ENCODE measurements at regions of chr5 and their contacts with region 1.

Region 1: DNA sequence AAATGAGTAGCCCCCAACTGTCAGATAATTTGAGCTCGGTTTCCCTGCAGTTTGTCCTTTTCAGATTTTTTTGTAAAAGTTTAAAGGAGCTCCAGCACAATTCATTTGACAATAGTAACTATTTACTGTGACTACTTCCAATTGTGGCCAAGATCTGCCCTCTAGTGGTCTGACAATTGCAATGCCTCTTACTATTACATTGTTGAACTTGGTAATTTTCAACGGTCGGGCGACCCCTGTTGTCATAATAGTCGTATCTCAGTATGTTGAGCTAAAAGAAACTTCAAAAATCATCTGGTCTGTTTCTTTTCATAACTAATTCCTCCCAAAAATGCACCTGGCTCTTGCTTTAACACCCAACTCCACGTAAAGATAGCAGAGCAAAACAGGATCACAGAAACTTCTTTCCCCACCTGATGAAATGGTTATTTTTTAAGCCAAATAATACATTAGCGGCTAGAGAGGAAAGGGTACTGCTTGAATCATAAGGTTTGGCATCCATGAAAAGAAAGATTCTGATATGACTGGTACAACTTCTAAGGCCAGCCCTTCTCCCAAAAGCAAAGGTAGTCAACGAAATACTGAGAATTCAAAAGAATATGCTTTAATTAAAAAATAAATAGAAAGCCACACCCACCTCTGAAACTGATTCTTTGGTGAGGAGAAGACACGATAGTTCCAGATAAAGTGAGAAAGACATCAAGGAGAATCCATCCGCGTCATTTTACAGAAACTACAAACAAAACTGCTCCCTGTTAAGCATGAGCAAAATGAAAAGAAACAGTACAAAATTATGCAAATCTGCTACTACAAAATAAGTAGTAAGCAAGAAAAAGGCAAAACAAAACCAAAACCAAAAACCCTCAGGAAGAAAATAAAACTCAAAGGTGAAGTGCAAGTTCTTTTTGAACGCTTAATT is 76.9 kb upstream of the HTR4 start:
- DNase-seq: peak; percentile 90
- H3K4me3 ChIP-seq: peak overlapping the region; percentile 29; the same call in 1 of the 2 replicates
- H3K27ac ChIP-seq: no peak overlapping the region
- H3K4me1 ChIP-seq: peaks cover 11% of the 10 kb centered on the region; the same call in 1 of the 2 replicates
- H3K27me3 ChIP-seq: no peaks in the 10 kb centered on the region; the same call in 1 of the 2 replicates

Region 2: GRCh38 chr5:148443998-148444397 is 287.2 kb before region 1 on chr5:
- in situ Hi-C with region 1: loop called (anchors 10 kb)
- DNase-seq: peak; percentile 76
- H3K4me3 ChIP-seq: no peak overlapping the region
- H3K27ac ChIP-seq: no peak overlapping the region
- H3K4me1 ChIP-seq: no peaks in the 10 kb centered on the region
- H3K27me3 ChIP-seq: no peaks in the 10 kb centered on the region

Region 3: DNA sequence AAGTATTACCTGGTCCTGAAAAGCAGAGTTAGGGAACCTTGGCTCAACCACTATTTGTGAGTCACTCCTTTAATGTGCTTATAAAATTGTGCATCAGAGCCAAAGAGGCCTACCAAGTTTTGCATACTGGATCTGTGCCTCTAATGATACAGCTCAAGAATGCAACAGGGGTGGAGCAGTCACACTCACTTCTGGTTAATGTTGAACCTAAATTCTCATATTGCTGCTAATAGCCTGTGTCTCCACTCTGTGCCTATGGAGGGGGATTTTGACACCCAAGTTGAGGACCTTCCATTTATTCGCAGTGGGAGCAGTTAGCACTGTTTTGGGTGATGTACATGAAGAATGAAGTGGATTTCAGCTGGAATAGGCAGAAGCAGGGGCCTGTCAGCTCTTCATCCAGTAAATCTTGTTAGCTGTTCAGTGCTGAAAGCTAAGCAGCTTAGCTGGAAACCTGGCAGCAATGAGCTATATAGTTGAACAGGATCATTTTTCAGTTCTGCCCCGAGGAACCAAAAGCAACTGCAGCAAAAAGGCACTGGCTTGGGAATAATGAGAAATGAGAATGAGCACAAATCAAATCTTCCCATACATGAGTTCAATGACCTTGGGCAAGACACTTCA is 322.0 kb after region 1 on chr5:
- in situ Hi-C with region 1: no loop called
- DNase-seq: peak; percentile 79
- H3K4me3 ChIP-seq: no peak overlapping the region
- H3K27ac ChIP-seq: peak overlapping the region; percentile 29
- H3K4me1 ChIP-seq: peaks cover 17% of the 10 kb centered on the region
- H3K27me3 ChIP-seq: no peaks in the 10 kb centered on the region

Region 4: GRCh38 chr5:149238583-149238982 is 507.4 kb after region 1 on chr5:
- in situ Hi-C with region 1: loop called (anchors 10 kb)
- DNase-seq: no peak
- H3K4me3 ChIP-seq: no peak overlapping the region
- H3K27ac ChIP-seq: no peak overlapping the region
- H3K4me1 ChIP-seq: no peaks in the 10 kb centered on the region
- H3K27me3 ChIP-seq: no peaks in the 10 kb centered on the region